ENCODE measurements at regions of chr20 and their contacts with region 1.

Region 1: DNA sequence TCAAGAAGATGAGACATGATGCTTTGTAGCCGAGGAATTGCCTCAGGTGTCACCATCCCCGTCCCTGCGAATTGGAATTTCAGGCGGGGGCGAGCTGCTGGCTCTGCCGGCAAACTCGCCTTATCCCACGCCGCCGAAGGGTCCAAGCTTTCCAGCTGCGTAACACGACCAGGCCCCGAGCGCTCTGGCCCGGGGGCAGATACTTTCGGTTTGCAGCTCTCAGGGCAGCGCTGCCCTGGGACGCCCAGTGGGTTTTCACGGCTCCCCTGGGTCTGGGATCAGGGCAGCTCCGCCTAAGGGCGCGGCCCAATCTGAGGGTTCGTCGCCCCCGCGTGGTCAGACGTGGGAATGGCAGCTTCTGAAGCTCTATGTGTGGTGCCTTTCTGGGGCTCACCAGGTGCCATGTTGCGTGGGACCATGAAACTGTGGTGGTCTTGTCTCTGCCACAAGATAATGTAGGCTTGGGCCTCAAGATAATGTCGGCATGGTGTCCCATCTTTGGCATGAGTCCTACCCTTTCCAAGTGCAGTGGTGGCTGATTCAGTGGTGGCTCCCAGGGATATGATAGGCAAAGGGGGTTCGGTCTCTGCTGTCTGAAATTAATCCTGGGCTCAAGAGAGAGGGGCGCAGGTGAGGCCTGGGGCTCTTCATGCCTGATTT is 20.9 kb downstream of the PIGT start:
- DNase-seq: peak; percentile 97
- H3K4me3 ChIP-seq: peak overlapping the region; percentile 12 to 73 (median 46)
- H3K27ac ChIP-seq: peak overlapping the region in 7 of 8 donors; percentile 47 to 81 (median 72)
- H3K4me1 ChIP-seq: peaks cover 0 to 34% (median 25%) of the 10 kb centered on the region in 6 donors
- H3K27me3 ChIP-seq: no peaks in the 10 kb centered on the region
- CTCF ChIP-seq: peak; percentile 91 to 98 (median 96)
- POLR2A ChIP-seq: peak in 1 of 3 donors; percentile 20

Region 2: GRCh38 chr20:45322952-45323383 is 113.9 kb before region 1 on chr20:
- intact Hi-C with region 1: loop called (anchors 5 kb)
- DNase-seq: no peak
- H3K4me3 ChIP-seq: no peak overlapping the region
- H3K27ac ChIP-seq: no peak overlapping the region
- H3K4me1 ChIP-seq: peaks cover 3 to 45% (median 30%) of the 10 kb centered on the region in 6 donors
- H3K27me3 ChIP-seq: no peaks in the 10 kb centered on the region
- CTCF ChIP-seq: peak in 4 of 11 experiments; percentile 21 to 42 (median 38)
- POLR2A ChIP-seq: no peak

Region 3: DNA sequence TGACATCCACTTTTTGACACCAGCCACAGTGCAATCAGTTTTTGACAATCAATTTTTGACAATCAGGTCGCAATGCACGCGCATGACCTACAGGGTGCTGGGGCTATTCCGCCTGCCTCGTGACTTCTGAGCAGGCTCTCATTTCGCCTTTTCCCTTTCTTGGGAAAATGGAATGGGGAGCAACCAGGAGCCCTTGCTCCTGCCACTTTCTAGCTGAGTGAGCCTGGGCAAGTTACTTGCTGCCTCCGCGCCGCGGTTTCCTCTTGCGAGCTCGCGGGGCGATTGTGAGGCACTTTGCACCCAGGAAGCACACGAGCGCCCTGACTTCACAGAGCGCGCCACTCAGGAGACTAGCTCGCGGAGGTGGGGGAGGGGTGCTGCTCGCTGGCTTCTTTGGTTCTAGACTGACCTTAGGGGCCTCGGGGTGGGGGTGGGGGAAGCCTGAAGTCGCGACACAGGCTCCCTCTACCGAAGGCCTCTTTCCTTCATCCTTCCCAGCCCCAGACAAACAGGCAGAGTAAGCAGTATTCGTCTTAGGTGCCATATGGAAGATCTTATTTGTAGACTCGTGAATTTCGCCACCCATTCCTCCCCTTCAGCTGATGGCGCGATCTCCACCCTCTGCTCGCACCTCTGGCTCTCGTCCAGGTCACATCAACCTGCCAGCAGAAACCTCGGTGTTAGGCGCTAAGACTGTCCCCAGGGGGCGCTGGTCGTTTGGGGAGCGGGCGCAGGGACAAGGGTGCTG is 63.3 kb before region 1 on chr20:
- intact Hi-C with region 1: loop called (anchors 5 kb)
- DNase-seq: peak; percentile 97
- H3K4me3 ChIP-seq: peak overlapping the region; percentile 24 to 72 (median 48)
- H3K27ac ChIP-seq: peak overlapping the region; percentile 5 to 85 (median 75)
- H3K4me1 ChIP-seq: peaks cover 14 to 60% (median 38%) of the 10 kb centered on the region in 6 donors
- H3K27me3 ChIP-seq: no peaks in the 10 kb centered on the region
- CTCF ChIP-seq: peak; percentile 80 to 96 (median 89)
- POLR2A ChIP-seq: no peak

Measured in spleen (tissue), 13 donors.